T-cell (primary cell): ENCODE measurements at regions of chr6 and their contacts with region 1.

Region 1: GRCh38 chr6:44655412-44656342 is 268.2 kb downstream of the CDC5L start:
- DNase-seq: peak; percentile 27 to 79 (median 66)
- ATAC-seq: peak; percentile 61 to 76 (median 74)
- H3K4me3 ChIP-seq: no peak overlapping the region
- H3K4me3 Mint-ChIP-seq: peak overlapping the region; percentile 22 to 58 (median 51)
- H3K27ac ChIP-seq: no peak overlapping the region
- H3K27ac Mint-ChIP-seq: peak overlapping the region; percentile 75 to 88
- H3K4me1 ChIP-seq: peaks cover 4 to 9% of the 10 kb centered on the region in 2 experiments
- H3K4me1 Mint-ChIP-seq: peaks cover 8 to 9% (median 8%) of the 10 kb centered on the region in 3 donors
- H3K27me3 ChIP-seq: peaks cover 0 to 13% of the 10 kb centered on the region in 2 experiments
- H3K27me3 Mint-ChIP-seq: peaks cover 8% of the 10 kb centered on the region in 2 donors

Region 2: DNA sequence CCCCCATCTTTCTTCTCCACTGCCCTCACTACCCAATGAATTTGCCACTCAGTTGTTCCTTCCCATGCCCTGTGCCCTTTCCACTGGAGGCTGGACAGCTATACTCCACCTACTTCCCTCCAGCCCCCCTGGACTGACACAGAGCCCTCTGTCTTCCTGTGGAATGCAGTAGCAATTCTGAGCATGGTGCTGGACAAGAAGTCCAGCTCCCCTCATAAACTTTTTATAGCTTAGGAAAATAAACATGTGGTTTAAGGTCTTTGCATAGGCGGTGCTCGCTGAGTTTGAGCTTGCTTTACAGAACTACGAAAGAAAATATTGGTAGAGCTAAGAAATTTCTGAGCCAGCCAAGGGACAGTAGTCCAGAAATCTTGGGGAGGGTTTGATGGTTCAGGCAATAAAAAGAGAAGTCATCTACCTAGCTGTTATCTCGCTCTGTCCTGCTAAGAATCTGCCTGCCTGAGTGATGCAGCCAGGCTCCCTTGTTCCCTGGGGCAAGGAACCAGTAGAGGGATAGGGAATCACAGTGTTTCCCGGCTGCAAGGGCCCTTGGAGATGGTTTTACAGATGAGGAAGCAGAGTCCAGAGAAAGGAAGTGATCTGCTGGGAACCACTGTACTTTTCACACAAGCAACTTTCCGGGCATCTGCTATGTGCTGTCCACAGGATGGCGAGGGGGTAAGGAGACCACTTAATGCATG is 75.2 kb after region 1 on chr6:
- CTCF ChIA-PET with region 1: no interaction called
- POLR2A ChIA-PET with region 1: no interaction called
- DNase-seq: no peak
- ATAC-seq: no peak
- H3K4me3 ChIP-seq: no peak overlapping the region
- H3K4me3 Mint-ChIP-seq: no peak overlapping the region
- H3K27ac ChIP-seq: no peak overlapping the region
- H3K27ac Mint-ChIP-seq: no peak overlapping the region
- H3K4me1 ChIP-seq: no peaks in the 10 kb centered on the region
- H3K4me1 Mint-ChIP-seq: peaks cover 0 to 4% (median 0%) of the 10 kb centered on the region in 3 donors
- H3K27me3 ChIP-seq: peaks cover 0 to 4% of the 10 kb centered on the region in 2 experiments
- H3K27me3 Mint-ChIP-seq: no peaks in the 10 kb centered on the region

Region 3: DNA sequence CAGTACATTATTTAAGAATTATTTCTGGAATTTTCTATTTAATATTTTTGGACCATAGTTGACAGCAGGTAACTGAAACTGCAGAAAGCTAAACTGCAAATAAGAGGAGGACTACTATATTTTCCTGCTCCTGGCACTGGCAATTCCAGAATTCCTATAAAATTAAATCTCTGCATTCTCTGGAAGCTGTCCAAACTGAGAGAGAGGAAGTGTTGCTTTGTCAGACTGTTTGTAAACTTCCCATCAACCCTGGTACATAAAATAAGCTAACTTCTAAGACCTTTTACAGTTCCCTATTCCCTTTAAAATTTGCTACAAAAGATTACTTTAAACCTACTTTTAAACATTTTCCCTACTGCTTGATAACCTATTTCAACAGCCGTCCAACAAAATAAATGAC is 476.4 kb after region 1 on chr6:
- CTCF ChIA-PET with region 1: no interaction called
- POLR2A ChIA-PET with region 1: interaction called in 1 of 2 experiments, 10 read pairs
- DNase-seq: no peak
- ATAC-seq: no peak
- H3K4me3 ChIP-seq: no peak overlapping the region
- H3K4me3 Mint-ChIP-seq: no peak overlapping the region
- H3K27ac ChIP-seq: no peak overlapping the region
- H3K27ac Mint-ChIP-seq: no peak overlapping the region
- H3K4me1 ChIP-seq: no peaks in the 10 kb centered on the region
- H3K4me1 Mint-ChIP-seq: peaks cover 0 to 6% (median 0%) of the 10 kb centered on the region in 3 donors
- H3K27me3 ChIP-seq: no peaks in the 10 kb centered on the region
- H3K27me3 Mint-ChIP-seq: no peaks in the 10 kb centered on the region